ENCODE measurements at regions of chr7 and their contacts with region 1.

Region 1: DNA sequence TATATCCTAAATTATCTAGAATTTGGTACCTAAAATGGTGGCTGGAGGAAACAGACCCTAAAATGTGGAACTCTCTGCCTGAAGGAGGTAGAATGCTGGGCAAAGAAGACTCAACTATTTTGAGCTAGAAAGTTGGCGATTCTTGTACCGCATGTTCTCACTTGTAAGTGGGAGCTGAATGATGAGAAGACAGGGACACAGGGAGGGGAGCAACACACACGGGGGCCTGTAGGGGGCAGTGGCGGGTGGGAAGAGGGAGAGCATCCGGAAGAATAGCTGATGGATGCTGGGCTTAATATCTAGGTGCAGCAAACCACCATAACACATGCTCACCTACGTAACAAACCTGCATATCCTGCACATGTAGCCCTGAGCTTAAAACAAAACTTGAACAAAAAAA is 250.6 kb downstream of the CALN1 start:
- DNase-seq: peak in 1 of 2 experiments; percentile 89
- H3K4me3 ChIP-seq: no peak overlapping the region
- H3K27ac ChIP-seq: no peak overlapping the region
- H3K4me1 ChIP-seq: no peaks in the 10 kb centered on the region
- H3K27me3 ChIP-seq: no peaks in the 10 kb centered on the region
- CTCF ChIP-seq: peak; percentile 63 to 90 (median 83)
- EP300 ChIP-seq: no peak
- POLR2A ChIP-seq: no peak
- RAD21 ChIP-seq: peak; percentile 75 to 80

Region 2: DNA sequence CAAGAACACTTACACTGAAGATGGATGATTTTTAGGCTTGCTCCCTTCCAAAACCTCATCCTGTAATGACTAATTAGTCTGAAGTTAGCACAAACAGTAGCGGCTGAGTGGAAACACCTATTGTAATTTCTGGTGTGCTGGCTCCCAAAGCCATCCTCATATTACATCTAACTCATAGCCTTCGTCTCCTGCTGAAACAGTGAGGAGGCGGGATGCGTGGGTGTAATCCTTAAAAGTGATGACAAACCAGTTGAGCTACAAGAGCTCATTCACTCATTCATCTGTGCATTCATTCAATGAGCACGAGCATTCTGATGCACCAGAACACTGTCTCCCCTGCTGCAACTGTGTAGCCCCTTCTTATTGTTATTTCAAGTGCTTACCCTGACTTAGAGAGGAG is 15.3 kb after region 1 on chr7:
- CTCF ChIA-PET with region 1: interaction called, 16 read pairs
- POLR2A ChIA-PET with region 1: no interaction called
- DNase-seq: no peak
- H3K4me3 ChIP-seq: no peak overlapping the region
- H3K27ac ChIP-seq: no peak overlapping the region
- H3K4me1 ChIP-seq: no peaks in the 10 kb centered on the region
- H3K27me3 ChIP-seq: no peaks in the 10 kb centered on the region
- CTCF ChIP-seq: no peak
- EP300 ChIP-seq: no peak
- POLR2A ChIP-seq: no peak
- RAD21 ChIP-seq: no peak

Measured in H1 (cell line).